ENCODE measurements at regions of chr5 and their contacts with region 1.

Region 1: GRCh38 chr5:127875235-127876021 is 172.2 kb downstream of the CCDC192 start:
- DNase-seq: peak; percentile 71
- ATAC-seq: peak; percentile 92
- H3K4me3 ChIP-seq: no peak overlapping the region
- H3K27ac ChIP-seq: no peak overlapping the region
- H3K4me1 ChIP-seq: no peaks in the 10 kb centered on the region; the same call in 1 of the 2 replicates
- H3K27me3 ChIP-seq: no peaks in the 10 kb centered on the region
- CTCF ChIP-seq: peak; percentile 29 to 57 (median 43); a peak in 5 of 6 replicates
- EP300 ChIP-seq: no peak
- POLR2A ChIP-seq: no peak
- RAD21 ChIP-seq: peak; percentile 81

Region 2: DNA sequence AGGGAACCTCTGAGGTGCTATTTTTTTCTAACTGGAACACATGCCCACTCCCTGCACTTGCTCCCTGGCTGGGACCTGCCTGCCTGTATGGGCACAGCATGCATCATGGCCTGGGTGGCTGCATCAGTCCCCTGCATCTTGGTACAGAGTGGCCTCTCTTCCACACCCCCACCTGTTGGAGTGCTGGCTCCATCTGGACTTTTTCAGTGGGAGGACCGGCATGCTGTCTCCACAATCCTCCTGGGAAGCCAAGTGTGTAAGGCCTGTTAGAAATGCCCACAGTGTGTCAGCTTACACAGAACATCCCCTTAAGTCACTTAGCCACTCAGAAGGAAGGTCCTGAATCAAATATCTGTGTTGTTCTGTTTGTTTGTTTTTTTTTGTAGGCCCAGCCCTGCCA is 948.0 kb before region 1 on chr5:
- CTCF ChIA-PET with region 1: no interaction called
- POLR2A ChIA-PET with region 1: no interaction called
- RAD21 ChIA-PET with region 1: no interaction called
- SMC1A ChIA-PET with region 1: no interaction called
- in situ Hi-C with region 1: no loop called
- intact Hi-C with region 1: no loop called
- DNase-seq: no peak
- ATAC-seq: no peak
- H3K4me3 ChIP-seq: no peak overlapping the region
- H3K27ac ChIP-seq: no peak overlapping the region
- H3K4me1 ChIP-seq: no peaks in the 10 kb centered on the region
- H3K27me3 ChIP-seq: no peaks in the 10 kb centered on the region
- CTCF ChIP-seq: no peak
- EP300 ChIP-seq: no peak
- POLR2A ChIP-seq: no peak
- RAD21 ChIP-seq: no peak

Region 3: GRCh38 chr5:127564002-127564769 is 311.2 kb before region 1 on chr5:
- CTCF ChIA-PET with region 1: interaction called, 17 read pairs
- POLR2A ChIA-PET with region 1: no interaction called
- RAD21 ChIA-PET with region 1: interaction called, 10 read pairs
- SMC1A ChIA-PET with region 1: interaction called, 9 read pairs
- in situ Hi-C with region 1: loop called (anchors 5 kb)
- intact Hi-C with region 1: loop called (anchors 2 kb)
- DNase-seq: no peak
- ATAC-seq: peak; percentile 81
- H3K4me3 ChIP-seq: no peak overlapping the region
- H3K27ac ChIP-seq: no peak overlapping the region
- H3K4me1 ChIP-seq: peaks cover 13% of the 10 kb centered on the region
- H3K27me3 ChIP-seq: no peaks in the 10 kb centered on the region
- CTCF ChIP-seq: peak; percentile 67 to 88 (median 70); a peak in 5 of 6 replicates
- EP300 ChIP-seq: 0 out of 4 replicates have a peak, but pooled peaks of 1 of the 2 experiments have one; percentile 14
- POLR2A ChIP-seq: no peak
- RAD21 ChIP-seq: peak; percentile 93

Region 4: DNA sequence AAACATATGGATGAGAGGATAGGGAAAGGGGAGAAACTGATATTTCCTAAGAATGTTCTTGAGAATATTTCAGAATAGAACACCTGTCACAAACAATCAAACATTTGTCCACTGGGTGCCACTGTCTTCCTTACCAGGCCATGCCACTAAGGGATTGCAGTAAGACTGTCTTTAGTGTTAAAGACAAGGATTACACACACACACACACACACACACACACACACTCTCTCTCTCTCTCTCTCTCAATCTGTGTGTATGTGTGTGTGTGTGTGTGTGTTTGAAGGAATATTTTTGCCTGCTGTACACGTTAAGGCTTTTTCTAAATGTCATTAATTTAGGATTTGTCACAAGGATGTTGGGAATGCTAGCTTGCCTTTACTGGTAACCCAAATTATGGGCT is 117.9 kb before region 1 on chr5:
- CTCF ChIA-PET with region 1: interaction called, 8 read pairs
- POLR2A ChIA-PET with region 1: interaction called, 9 read pairs
- RAD21 ChIA-PET with region 1: interaction called, 7 read pairs
- SMC1A ChIA-PET with region 1: interaction called, 17 read pairs
- in situ Hi-C with region 1: no loop called
- intact Hi-C with region 1: no loop called
- DNase-seq: peak; percentile 16
- ATAC-seq: peak; percentile 92
- H3K4me3 ChIP-seq: no peak overlapping the region
- H3K27ac ChIP-seq: no peak overlapping the region
- H3K4me1 ChIP-seq: no peaks in the 10 kb centered on the region
- H3K27me3 ChIP-seq: no peaks in the 10 kb centered on the region
- CTCF ChIP-seq: peak; percentile 14 to 60 (median 21); a peak in 4 of 6 replicates
- EP300 ChIP-seq: no peak
- POLR2A ChIP-seq: no peak
- RAD21 ChIP-seq: peak; percentile 65

Region 5: GRCh38 chr5:127856292-127856691 is 19.1 kb before region 1 on chr5:
- CTCF ChIA-PET with region 1: interaction called, 4 read pairs
- POLR2A ChIA-PET with region 1: no interaction called
- RAD21 ChIA-PET with region 1: no interaction called
- SMC1A ChIA-PET with region 1: interaction called, 10 read pairs
- in situ Hi-C with region 1: no loop called
- intact Hi-C with region 1: no loop called
- DNase-seq: no peak
- ATAC-seq: peak; percentile 35; the same call in 1 of the 3 replicates
- H3K4me3 ChIP-seq: no peak overlapping the region
- H3K27ac ChIP-seq: no peak overlapping the region
- H3K4me1 ChIP-seq: no peaks in the 10 kb centered on the region
- H3K27me3 ChIP-seq: no peaks in the 10 kb centered on the region
- CTCF ChIP-seq: no peak
- EP300 ChIP-seq: no peak
- POLR2A ChIP-seq: no peak
- RAD21 ChIP-seq: no peak

Region 6: GRCh38 chr5:127898551-127899213 is 23.3 kb after region 1 on chr5:
- CTCF ChIA-PET with region 1: interaction called, 7 read pairs
- POLR2A ChIA-PET with region 1: no interaction called
- RAD21 ChIA-PET with region 1: interaction called, 4 read pairs
- SMC1A ChIA-PET with region 1: interaction called, 22 read pairs
- in situ Hi-C with region 1: no loop called
- intact Hi-C with region 1: no loop called
- DNase-seq: no peak
- ATAC-seq: peak; percentile 73
- H3K4me3 ChIP-seq: no peak overlapping the region
- H3K27ac ChIP-seq: no peak overlapping the region
- H3K4me1 ChIP-seq: no peaks in the 10 kb centered on the region
- H3K27me3 ChIP-seq: no peaks in the 10 kb centered on the region
- CTCF ChIP-seq: no peak
- EP300 ChIP-seq: no peak
- POLR2A ChIP-seq: no peak
- RAD21 ChIP-seq: no peak

Region 7: DNA sequence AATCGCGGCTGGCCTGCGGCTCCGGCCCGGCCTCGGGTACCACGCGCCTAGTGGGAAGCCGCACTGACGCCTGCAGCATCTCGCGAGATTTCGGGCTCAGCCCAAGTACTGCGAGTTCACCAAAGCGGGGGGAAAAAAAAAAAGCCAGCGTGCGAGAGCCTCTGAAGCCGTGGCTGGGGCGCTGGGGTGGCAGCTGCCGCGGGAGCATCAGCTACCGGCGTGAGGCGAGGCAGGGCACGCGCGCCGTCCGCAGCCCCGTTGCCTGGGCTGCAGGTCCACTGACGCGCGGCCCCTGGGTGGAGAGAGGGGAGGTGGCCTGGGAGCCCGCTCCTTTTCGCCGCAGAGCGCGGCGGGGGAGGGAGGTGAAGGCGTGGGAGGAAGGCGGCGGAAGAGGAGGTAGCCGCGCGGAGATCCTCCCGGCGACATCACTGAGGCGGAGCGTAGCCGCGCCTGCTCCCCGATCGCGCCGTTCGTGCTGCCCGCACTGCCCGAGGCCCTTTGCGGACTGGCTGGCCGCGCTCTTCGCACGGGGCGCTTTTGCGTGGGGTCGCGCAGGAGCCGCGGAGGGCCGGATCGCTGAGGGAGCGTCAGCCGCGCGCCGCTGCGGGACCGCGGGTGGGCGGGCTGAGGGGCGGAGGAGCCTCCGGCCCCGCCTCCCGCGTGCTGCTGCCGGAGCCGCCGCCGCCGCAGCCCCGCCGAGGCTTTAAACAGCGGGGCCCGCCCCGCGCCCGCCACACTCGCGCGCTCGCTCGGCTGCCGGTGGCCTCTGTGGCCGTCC is 207.8 kb after region 1 on chr5 and contains the start of gene SLC12A2:
- CTCF ChIA-PET with region 1: interaction called, 9 read pairs
- POLR2A ChIA-PET with region 1: no interaction called
- RAD21 ChIA-PET with region 1: interaction called, 48 read pairs
- SMC1A ChIA-PET with region 1: interaction called, 10 read pairs
- in situ Hi-C with region 1: no loop called
- intact Hi-C with region 1: loop called (anchors 2 kb)
- DNase-seq: peak; percentile 74
- ATAC-seq: peak; percentile 68
- H3K4me3 ChIP-seq: peak within 1 kb of the TSS; percentile 86
- H3K27ac ChIP-seq: peak within 1 kb of the TSS; percentile 90
- H3K4me1 ChIP-seq: no peaks in the 10 kb centered on the region; the same call in 1 of the 2 replicates
- H3K27me3 ChIP-seq: no peaks in the 10 kb centered on the region
- CTCF ChIP-seq: no peak
- EP300 ChIP-seq: peak in 1 of 2 experiments; percentile 6; a peak in 1 of 4 replicates
- POLR2A ChIP-seq: peak; percentile 90
- RAD21 ChIP-seq: no peak
- polyA plus RNA-seq, gene SLC12A2: 6.3 to 6.9 TPM

Region 8: GRCh38 chr5:128498844-128499455 is 623.5 kb after region 1 on chr5:
- CTCF ChIA-PET with region 1: interaction called, 5 read pairs
- POLR2A ChIA-PET with region 1: no interaction called
- RAD21 ChIA-PET with region 1: interaction called, 3 read pairs
- SMC1A ChIA-PET with region 1: interaction called, 4 read pairs
- in situ Hi-C with region 1: no loop called
- intact Hi-C with region 1: loop called (anchors 10 kb)
- DNase-seq: no peak
- ATAC-seq: peak; percentile 57
- H3K4me3 ChIP-seq: no peak overlapping the region
- H3K27ac ChIP-seq: no peak overlapping the region
- H3K4me1 ChIP-seq: no peaks in the 10 kb centered on the region
- H3K27me3 ChIP-seq: no peaks in the 10 kb centered on the region
- CTCF ChIP-seq: peak; percentile 28 to 41 (median 30); a peak in 4 of 6 replicates
- EP300 ChIP-seq: no peak
- POLR2A ChIP-seq: no peak
- RAD21 ChIP-seq: peak; percentile 71